Activated T-helper 2 cell treated with anti-CD3 and anti-CD28 coated beads, Interferon-gamma antibody, Interleukin-2, Interleukin-4, amounts not matched to agents 10 μg/mL and 5 μg/mL and 100 μg/mL, durations not matched to agents 14 hours and 24 hours and 36 hours (primary cell): ENCODE measurements at regions of chr11 and their contacts with region 1.

Region 1: DNA sequence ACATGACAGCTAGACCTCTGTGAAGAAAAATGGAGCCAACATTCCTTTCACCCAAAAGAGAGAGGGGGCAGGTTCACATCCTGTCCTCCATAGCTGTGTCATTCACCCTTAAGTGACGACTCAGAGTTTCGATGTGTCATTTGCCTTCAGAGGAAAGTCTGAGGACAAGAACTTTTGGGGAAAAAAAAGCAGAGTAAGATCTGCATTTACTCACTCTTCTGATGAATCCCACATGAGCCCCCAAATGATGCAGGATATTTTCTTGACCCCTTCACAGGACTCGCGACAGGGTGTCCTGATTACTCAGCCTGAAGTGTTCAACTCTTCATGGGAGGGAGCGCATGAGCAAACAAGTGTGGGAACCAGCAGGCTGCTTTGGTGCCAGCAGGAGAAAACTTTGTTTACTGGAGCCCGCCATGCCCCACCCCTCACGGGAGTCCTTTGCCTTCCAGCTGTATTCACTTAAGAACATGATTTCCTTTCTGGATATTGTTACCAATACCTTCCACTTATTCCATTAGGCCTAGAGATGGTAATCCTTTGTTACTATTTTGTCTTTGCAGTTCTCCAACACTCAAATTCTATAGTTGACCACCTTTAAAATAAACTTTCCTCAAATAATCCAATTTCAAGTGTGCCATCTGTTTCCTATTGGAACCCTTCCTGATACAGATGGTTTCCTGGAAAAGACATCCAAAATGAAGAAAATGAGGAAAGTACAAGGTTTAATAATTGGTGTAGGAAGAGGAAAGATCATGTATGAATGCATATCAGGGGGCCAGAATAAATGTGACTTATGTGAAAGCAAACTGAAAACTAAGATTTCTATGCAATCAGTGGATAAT is 729.8 kb downstream of the FAM181B start:
- DNase-seq: no peak
- H3K4me3 Mint-ChIP-seq: no peak overlapping the region
- H3K27ac Mint-ChIP-seq: peak overlapping the region; percentile 46
- H3K4me1 Mint-ChIP-seq: peaks cover 21% of the 10 kb centered on the region
- H3K27me3 Mint-ChIP-seq: no peaks in the 10 kb centered on the region

Region 2: GRCh38 chr11:81787584-81788049 is 216.3 kb before region 1 on chr11:
- intact Hi-C with region 1: loop called (anchors 1 kb)
- DNase-seq: no peak
- H3K4me3 Mint-ChIP-seq: no peak overlapping the region
- H3K27ac Mint-ChIP-seq: peak overlapping the region; percentile 70
- H3K4me1 Mint-ChIP-seq: peaks cover 16% of the 10 kb centered on the region
- H3K27me3 Mint-ChIP-seq: peaks cover 3% of the 10 kb centered on the region

Region 3: GRCh38 chr11:81869351-81870065 is 134.4 kb before region 1 on chr11:
- intact Hi-C with region 1: loop called (anchors 1 kb)
- DNase-seq: peak; percentile 86
- H3K4me3 Mint-ChIP-seq: peak overlapping the region; percentile 55
- H3K27ac Mint-ChIP-seq: peak overlapping the region; percentile 88
- H3K4me1 Mint-ChIP-seq: peaks cover 43% of the 10 kb centered on the region
- H3K27me3 Mint-ChIP-seq: peaks cover 1% of the 10 kb centered on the region

Region 4: GRCh38 chr11:81874635-81875034 is 129.3 kb before region 1 on chr11:
- intact Hi-C with region 1: loop called (anchors 1 kb)
- DNase-seq: peak; percentile 37
- H3K4me3 Mint-ChIP-seq: peak overlapping the region; percentile 7
- H3K27ac Mint-ChIP-seq: peak overlapping the region; percentile 13
- H3K4me1 Mint-ChIP-seq: peaks cover 37% of the 10 kb centered on the region
- H3K27me3 Mint-ChIP-seq: peaks cover 1% of the 10 kb centered on the region

Region 5: GRCh38 chr11:81963018-81963417 is 40.9 kb before region 1 on chr11:
- intact Hi-C with region 1: loop called (anchors 5 kb)
- DNase-seq: no peak
- H3K4me3 Mint-ChIP-seq: no peak overlapping the region
- H3K27ac Mint-ChIP-seq: no peak overlapping the region
- H3K4me1 Mint-ChIP-seq: peaks cover 26% of the 10 kb centered on the region
- H3K27me3 Mint-ChIP-seq: no peaks in the 10 kb centered on the region

Region 6: DNA sequence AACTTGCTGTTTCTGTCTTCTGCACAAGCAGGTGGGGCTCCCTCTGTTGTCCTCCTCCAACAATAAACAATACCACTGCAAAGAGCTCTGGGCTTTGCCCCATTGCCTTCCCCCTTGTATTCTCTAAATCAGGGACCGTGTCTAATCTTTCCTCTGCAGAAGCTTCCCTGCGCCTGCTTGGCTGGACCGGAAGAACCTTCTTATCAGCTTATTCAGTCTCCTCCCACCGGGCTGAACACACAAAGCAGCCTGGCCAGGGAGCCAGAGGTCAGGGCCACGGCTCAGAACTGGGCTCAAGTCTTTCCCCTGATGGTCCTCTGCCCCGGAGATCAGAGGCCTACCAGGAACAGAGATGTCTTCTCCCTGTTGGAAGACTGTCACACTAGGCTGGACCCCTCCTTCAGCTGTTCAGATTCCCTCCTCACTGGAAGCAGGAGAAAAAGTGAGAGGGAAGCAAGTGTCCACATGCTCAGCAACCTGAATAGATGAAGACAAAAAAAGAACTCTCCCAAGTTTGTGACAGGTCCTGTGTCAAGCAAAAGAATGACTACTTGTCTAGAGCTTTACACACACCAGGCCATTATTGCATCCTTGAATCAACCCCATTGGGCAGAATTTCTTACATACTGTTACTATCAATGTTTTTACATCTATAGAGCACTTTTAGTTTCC is 1004.2 kb after region 1 on chr11:
- intact Hi-C with region 1: loop called (anchors 10 kb)
- DNase-seq: no peak
- H3K4me3 Mint-ChIP-seq: peak overlapping the region; percentile 61
- H3K27ac Mint-ChIP-seq: peak overlapping the region; percentile 65
- H3K4me1 Mint-ChIP-seq: peaks cover 47% of the 10 kb centered on the region
- H3K27me3 Mint-ChIP-seq: no peaks in the 10 kb centered on the region